HAP-1 (cell line): ENCODE measurements at regions of chr20 and their contacts with region 1.

Region 1: GRCh38 chr20:48619473-48620268 is 208.1 kb downstream of the PREX1 start:
- DNase-seq: no peak
- H3K4me3 ChIP-seq: no peak overlapping the region
- H3K4me1 ChIP-seq: peaks cover 6% of the 10 kb centered on the region
- H3K27me3 ChIP-seq: no peaks in the 10 kb centered on the region

Region 2: DNA sequence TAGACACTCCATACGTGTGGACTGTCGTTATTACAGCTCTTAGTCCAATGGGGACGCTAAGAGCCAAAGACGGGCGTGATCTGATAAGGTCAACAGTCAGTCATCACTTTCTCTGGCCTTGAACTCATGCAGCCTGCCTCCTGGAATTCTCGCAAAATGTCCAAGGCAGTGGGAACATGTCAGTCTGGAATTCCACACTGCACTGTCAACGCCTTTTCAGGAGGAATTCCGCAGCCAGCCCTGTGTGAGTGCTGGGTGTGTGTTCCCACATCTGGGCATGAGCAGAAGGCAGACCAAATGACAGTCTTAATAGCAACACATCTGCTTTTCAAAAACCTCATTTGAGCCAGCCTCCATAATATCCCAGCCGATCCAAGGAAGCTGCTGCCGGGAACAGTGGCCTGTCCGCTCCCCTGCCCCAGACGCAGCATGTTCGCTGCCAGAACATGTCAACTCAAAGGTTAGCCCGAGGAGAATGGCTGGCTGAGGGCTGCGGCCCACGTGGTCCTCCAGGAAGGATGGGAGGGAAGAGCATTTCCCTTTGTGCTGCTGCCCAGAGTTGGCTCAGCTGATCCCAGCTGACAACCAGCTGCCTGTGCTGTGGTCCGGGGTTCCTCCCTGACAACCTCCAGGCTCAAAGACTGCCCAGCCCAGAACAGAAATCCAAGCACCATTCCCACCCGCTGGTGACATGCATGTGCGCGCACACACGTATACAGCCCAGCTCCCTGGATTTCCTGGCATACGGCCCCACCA is 937.5 kb before region 1 on chr20:
- in situ Hi-C with region 1: loop called (anchors 5 kb)
- DNase-seq: no peak
- H3K4me3 ChIP-seq: no peak overlapping the region
- H3K4me1 ChIP-seq: no peaks in the 10 kb centered on the region
- H3K27me3 ChIP-seq: no peaks in the 10 kb centered on the region

Region 3: DNA sequence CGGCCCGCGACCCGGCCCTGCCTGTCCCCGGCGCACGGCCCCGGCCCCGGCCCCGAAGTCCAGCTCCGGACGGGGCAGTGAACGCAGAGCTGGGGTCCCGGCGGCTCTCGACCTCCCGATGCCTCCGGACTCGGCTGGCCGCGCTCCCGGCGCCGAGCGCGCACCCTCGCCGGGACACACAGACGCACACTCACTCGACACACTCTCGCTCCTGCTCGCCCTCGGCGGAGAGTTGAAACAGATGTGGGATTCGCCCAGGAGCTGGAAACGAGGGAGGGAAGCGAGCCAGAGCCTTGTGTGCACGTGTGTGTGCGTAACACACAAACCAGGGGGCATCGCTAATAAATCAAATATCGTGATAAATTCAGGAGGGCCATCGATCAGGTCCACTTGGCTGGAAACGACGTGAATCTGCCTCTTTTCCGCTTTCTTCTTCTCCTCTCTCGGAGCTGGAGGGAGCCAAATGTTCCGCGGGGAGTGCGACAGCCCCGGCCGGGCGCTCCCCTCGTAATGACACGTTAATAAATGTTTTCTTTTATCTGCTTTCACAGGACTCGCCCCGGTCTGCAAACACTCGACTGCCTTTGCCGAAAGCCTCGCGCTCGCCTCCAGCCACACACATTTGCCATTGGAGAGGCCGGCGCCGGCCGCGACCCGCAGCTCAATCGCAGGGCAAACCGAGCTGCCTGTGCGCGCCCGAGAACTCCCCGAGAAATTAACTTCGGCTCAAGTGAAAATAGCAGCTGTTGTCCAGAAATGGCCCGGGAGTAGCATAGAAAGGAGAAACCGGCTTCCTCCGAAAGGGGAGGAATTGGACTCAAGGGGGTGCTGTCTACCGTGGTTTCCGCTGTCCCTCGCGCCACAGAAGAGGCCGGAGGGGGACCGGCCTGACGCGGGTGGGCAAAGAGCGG is 833.6 kb before region 1 on chr20:
- in situ Hi-C with region 1: loop called (anchors 5 kb)
- DNase-seq: peak; percentile 68 to 80
- H3K4me3 ChIP-seq: peak overlapping the region; percentile 29
- H3K4me1 ChIP-seq: peaks cover 10% of the 10 kb centered on the region
- H3K27me3 ChIP-seq: no peaks in the 10 kb centered on the region

Region 4: DNA sequence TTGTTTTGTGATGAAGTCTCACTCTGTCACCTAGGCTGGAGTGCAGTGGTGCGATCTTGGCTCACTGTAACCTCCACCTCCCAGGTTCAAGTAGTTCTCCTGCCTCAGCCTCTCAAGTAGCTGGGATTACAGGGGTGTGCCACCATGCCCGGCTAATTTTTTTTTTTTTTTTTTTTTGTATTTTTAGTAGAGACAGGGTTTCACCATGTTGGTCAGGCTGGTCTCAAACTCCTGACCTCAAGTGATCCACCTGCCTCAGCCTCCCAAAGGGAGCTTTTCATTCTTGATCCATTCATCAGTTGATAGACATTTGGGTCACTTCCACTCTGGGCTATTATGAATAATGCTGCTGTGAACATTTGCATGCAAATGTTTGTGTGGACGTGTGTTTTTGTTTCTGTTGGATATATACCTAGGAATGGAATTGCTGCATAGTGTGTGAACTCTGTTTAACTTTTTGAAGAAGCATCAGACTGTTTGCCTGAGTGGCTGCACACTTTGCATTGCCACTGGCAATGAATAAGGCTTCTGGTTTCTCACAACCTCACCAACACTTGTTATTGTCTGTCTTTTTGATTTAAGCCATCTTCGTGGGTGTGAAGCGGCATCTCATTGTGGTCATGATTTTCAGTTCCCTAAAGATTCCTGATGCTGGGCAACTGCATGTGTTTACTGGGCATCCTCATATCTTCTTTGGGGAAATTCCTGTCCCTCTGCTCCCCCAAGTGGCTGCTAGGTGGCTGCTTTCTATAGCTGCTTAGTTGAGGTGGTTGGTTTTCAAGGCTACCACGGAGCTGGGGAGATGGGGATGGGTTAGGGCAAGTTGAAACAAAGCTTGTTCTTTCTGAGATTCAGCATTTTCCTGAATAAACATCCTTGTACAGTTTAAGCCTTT is 430.8 kb before region 1 on chr20:
- in situ Hi-C with region 1: no loop called
- DNase-seq: peak in 1 of 2 experiments; percentile 33
- H3K4me3 ChIP-seq: no peak overlapping the region
- H3K4me1 ChIP-seq: peaks cover 36% of the 10 kb centered on the region
- H3K27me3 ChIP-seq: no peaks in the 10 kb centered on the region